ENCODE measurements at regions of chr11 and their contacts with region 1.

Region 1: DNA sequence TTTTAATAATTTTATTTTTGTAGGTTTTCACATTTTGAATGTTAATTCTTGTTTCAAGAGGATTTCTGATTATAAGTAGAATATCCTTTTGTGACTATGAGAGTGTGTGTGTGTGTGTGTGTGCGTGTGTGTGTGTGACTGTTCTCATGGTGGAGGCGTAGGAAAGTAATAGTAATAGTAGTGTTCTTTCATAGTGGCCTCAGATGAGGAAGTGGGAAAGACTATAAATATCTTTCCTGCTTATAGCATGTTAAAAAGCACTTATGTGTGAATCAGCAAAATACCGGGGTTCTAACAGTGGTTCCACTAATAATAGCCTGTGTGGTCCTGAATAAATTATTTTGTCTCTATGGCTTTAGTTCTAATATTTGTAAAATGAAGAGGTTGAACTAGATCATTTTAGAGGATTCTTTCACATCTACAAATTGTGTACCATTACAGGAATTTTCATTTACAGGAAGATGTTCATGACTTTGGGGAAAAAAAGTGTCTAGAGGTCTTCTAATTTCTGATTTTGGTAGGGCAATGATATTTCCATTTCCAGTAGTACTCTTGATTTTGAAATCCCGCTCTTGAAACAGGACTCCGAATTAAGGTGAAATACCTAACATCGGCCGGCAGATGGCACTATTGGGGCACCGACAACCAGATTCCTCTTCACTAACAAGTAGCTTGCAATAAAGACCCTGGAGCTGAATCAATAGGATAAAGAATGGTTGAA is 29.9 kb upstream of the OR10G7 start:
- DNase-seq: peak; percentile 74
- ATAC-seq: peak; percentile 15; the same call in 1 of the 2 replicates
- H3K4me3 Mint-ChIP-seq: no peak overlapping the region
- H3K27ac Mint-ChIP-seq: no peak overlapping the region
- H3K4me1 Mint-ChIP-seq: peaks cover 22% of the 10 kb centered on the region
- H3K27me3 Mint-ChIP-seq: peaks cover 3% of the 10 kb centered on the region; the same call in 1 of the 2 replicates
- CTCF ChIP-seq: peak; percentile 60

Region 2: GRCh38 chr11:123745764-123746451 is 325.2 kb before region 1 on chr11:
- CTCF ChIA-PET with region 1: interaction called, 11 read pairs
- POLR2A ChIA-PET with region 1: no interaction called
- DNase-seq: no peak
- ATAC-seq: peak; percentile 27
- H3K4me3 Mint-ChIP-seq: peak overlapping the region; percentile 38
- H3K27ac Mint-ChIP-seq: peak overlapping the region; percentile 94
- H3K4me1 Mint-ChIP-seq: peaks cover 52% of the 10 kb centered on the region
- H3K27me3 Mint-ChIP-seq: no peaks in the 10 kb centered on the region
- CTCF ChIP-seq: no peak

Region 3: GRCh38 chr11:124081483-124081882 is 10.4 kb after region 1 on chr11:
- CTCF ChIA-PET with region 1: interaction called, 13 read pairs
- POLR2A ChIA-PET with region 1: no interaction called
- DNase-seq: no peak
- ATAC-seq: no peak
- H3K4me3 Mint-ChIP-seq: no peak overlapping the region
- H3K27ac Mint-ChIP-seq: no peak overlapping the region
- H3K4me1 Mint-ChIP-seq: peaks cover 4% of the 10 kb centered on the region; the same call in 1 of the 2 replicates
- H3K27me3 Mint-ChIP-seq: no peaks in the 10 kb centered on the region
- CTCF ChIP-seq: no peak

Region 4: GRCh38 chr11:124114942-124115781 is 44.1 kb after region 1 on chr11 and contains the start of gene VWA5A:
- CTCF ChIA-PET with region 1: interaction called, 15 read pairs
- POLR2A ChIA-PET with region 1: interaction called, 5 read pairs
- DNase-seq: peak; percentile 74
- ATAC-seq: peak; percentile 92
- H3K4me3 Mint-ChIP-seq: peak within 1 kb of the TSS; percentile 96
- H3K27ac Mint-ChIP-seq: peak within 1 kb of the TSS; percentile 94
- H3K4me1 Mint-ChIP-seq: peaks cover 15% of the 10 kb centered on the region
- H3K27me3 Mint-ChIP-seq: no peaks in the 10 kb centered on the region
- CTCF ChIP-seq: no peak
- total RNA-seq, gene VWA5A: 19.5 to 26.0 TPM (median 23.1 TPM) in 3 replicates

Region 5: DNA sequence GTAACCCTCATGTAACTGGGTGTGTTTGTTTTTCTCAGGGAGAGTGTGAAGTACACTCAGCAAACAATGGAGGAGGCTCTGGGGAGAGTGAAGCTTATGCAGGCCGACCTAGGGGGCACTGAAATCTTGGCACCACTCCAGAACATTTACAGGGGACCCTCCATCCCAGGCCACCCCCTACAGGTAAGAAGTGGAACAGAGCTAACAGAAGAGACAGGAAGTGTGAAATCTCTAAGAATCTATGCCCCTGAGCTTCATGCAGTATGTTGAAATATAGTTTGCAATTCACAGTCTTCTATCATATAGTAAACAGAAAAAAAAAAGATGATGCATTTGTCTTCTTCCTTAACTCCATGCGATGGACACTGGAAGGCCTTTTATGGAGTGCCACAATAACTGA is 52.5 kb after region 1 on chr11:
- CTCF ChIA-PET with region 1: interaction called, 21 read pairs
- POLR2A ChIA-PET with region 1: no interaction called
- DNase-seq: peak; percentile 35
- ATAC-seq: peak; percentile 98
- H3K4me3 Mint-ChIP-seq: no peak overlapping the region
- H3K27ac Mint-ChIP-seq: no peak overlapping the region
- H3K4me1 Mint-ChIP-seq: peaks cover 6% of the 10 kb centered on the region
- H3K27me3 Mint-ChIP-seq: no peaks in the 10 kb centered on the region; the same call in 1 of the 2 replicates
- CTCF ChIP-seq: peak; percentile 31; the same call in 1 of the 2 replicates

Region 6: DNA sequence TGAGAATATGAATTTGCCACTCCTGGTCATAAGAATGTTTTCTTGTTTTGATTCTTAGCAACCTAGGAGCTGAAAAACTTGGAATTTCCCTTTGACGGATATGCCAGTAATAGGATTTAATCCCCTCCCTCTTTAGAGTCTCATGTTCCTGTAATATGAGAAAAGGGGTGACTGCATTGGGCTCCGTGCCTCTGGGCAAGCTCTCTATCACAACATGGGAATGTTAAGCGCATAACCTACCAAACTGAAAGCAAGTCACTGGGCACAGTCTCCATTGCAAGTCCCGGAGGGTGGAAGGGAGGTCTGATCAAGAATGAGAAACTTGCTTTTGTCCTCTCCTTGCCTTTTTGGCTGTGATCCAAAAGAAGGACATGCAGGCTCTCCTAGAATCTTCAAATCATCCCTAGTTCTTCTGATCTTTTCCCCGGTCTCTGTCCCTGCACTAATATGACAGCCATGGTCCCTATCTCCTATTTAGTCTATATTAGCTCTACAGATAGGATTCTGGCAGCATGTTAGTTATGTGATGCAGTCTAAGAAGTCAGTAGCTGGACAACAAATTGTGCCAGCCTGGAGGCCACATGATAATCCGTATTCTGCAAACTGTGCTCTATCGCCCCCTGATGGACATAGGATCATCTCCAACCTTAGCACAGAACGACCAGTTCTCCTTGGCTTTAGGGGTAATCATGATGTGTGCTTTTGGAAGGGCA is 123.8 kb after region 1 on chr11:
- CTCF ChIA-PET with region 1: interaction called, 29 read pairs
- POLR2A ChIA-PET with region 1: no interaction called
- DNase-seq: peak; percentile 56
- ATAC-seq: peak; percentile 96
- H3K4me3 Mint-ChIP-seq: no peak overlapping the region
- H3K27ac Mint-ChIP-seq: no peak overlapping the region
- H3K4me1 Mint-ChIP-seq: peaks cover 28% of the 10 kb centered on the region
- H3K27me3 Mint-ChIP-seq: peaks cover 26% of the 10 kb centered on the region
- CTCF ChIP-seq: peak; percentile 55; the same call in 1 of the 2 replicates

Region 7: DNA sequence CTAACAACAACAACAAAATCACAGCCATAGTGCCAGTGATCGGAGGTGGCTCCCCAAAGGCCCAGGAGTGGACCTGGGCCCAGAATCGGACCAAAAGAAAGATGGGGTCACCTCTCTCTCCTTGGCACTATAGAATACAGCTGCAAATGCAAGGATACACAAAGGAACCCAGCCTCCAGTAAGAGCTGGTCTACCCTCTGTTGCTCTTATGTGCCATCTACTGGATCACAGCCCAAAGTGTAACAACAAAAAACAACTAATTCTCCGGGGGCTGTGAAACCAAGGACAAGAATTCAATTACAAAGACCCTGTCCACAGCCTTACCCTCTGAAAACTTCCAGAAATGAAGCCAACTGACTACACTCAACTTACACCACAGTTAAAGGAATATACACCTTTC is 206.7 kb after region 1 on chr11:
- CTCF ChIA-PET with region 1: interaction called, 12 read pairs
- POLR2A ChIA-PET with region 1: no interaction called
- DNase-seq: no peak
- ATAC-seq: peak; percentile 94
- H3K4me3 Mint-ChIP-seq: no peak overlapping the region
- H3K27ac Mint-ChIP-seq: no peak overlapping the region
- H3K4me1 Mint-ChIP-seq: peaks cover 12% of the 10 kb centered on the region
- H3K27me3 Mint-ChIP-seq: no peaks in the 10 kb centered on the region
- CTCF ChIP-seq: no peak

Region 8: DNA sequence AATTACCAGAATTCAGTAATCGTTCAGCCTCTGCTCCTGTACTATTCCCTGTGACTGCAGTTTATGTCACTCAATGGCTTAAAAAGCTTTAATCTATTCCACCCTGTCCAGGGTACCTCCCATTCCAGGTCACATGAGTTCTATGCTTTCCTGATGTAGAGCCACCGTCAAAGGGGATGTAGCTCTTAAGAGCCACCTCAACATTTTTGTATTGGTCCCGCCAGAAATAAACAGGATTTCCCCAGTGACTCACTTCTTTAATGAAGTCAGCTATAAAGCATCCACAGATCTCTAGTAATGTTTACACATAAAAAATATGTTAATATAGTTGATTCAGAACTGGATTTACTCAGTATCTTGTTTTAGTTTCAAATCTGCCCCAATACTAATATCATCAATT is 244.0 kb after region 1 on chr11:
- CTCF ChIA-PET with region 1: no interaction called
- POLR2A ChIA-PET with region 1: no interaction called
- DNase-seq: no peak
- ATAC-seq: no peak
- H3K4me3 Mint-ChIP-seq: no peak overlapping the region
- H3K27ac Mint-ChIP-seq: no peak overlapping the region
- H3K4me1 Mint-ChIP-seq: no peaks in the 10 kb centered on the region
- H3K27me3 Mint-ChIP-seq: no peaks in the 10 kb centered on the region
- CTCF ChIP-seq: no peak

Region 9: DNA sequence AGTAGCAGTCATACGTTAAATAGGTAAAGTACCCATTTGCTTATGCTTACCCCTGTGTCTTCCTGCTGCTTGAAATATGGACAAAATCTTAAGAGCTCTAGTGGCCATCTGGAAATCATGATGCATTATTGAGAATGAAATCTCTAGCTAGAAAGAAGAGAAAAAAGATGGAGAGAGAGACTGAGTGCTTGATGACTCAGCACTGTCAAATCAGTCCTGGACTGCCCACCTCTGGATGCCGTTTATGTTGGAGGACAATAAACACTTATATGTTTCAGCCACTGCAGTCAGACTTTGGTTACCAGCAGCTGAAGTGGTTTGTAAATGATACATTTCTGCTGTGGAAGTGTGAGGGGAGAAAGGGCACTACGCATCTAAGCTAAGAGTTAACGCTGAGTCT is 350.0 kb after region 1 on chr11:
- CTCF ChIA-PET with region 1: no interaction called
- POLR2A ChIA-PET with region 1: no interaction called
- DNase-seq: no peak
- ATAC-seq: no peak
- H3K4me3 Mint-ChIP-seq: no peak overlapping the region
- H3K27ac Mint-ChIP-seq: no peak overlapping the region
- H3K4me1 Mint-ChIP-seq: no peaks in the 10 kb centered on the region
- H3K27me3 Mint-ChIP-seq: no peaks in the 10 kb centered on the region
- CTCF ChIP-seq: no peak